ENCODE measurements at regions of chr3 and their contacts with region 1.

Region 1: GRCh38 chr3:168047190-168047795 is 48.4 kb downstream of the GOLIM4 start:
- DNase-seq: peak in 5 of 9 donors; percentile 1 to 37 (median 13)
- ATAC-seq: peak; percentile 80
- H3K4me3 ChIP-seq: no peak overlapping the region
- H3K4me3 Mint-ChIP-seq: no peak overlapping the region
- H3K27ac ChIP-seq: no peak overlapping the region
- H3K27ac Mint-ChIP-seq: no peak overlapping the region
- H3K4me1 ChIP-seq: no peaks in the 10 kb centered on the region
- H3K4me1 Mint-ChIP-seq: no peaks in the 10 kb centered on the region
- H3K27me3 ChIP-seq: no peaks in the 10 kb centered on the region
- H3K27me3 Mint-ChIP-seq: peaks cover 0 to 4% (median 3%) of the 10 kb centered on the region in 5 donors

Region 2: DNA sequence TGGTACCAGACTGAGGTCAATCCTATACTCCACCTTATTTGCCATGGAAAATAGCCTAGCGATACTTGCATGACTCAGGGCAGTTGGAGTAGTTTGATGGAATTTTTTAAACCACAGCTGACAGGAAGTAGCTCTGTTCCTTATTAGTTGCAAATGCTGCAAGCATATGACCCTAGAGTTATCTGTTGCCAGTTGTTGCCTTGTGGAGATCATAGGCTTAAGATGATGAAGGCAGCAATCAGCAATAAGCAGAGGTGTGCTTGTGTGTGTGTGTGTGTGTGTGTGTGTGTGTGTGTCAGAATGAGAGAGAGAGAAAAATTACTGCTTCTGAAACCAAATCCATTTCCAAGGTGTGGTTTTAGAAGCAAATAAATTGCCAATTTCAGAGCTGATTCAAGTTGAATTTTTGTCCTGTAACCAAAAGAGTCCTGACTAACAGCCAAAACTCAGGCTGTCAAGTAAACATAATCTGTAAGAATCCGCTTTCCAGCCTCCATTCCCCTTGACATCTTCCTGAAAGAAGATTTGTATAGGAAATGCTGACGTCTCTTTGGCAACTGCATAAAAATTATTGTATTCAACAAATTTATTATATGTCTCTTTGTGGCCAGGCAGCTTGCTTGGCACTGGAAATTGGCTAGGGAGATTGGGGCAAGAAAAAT is 170.5 kb before region 1 on chr3:
- CTCF ChIA-PET with region 1: no interaction called
- POLR2A ChIA-PET with region 1: no interaction called
- intact Hi-C with region 1: no loop called
- DNase-seq: no peak
- ATAC-seq: no peak
- H3K4me3 ChIP-seq: no peak overlapping the region
- H3K4me3 Mint-ChIP-seq: no peak overlapping the region
- H3K27ac ChIP-seq: no peak overlapping the region
- H3K27ac Mint-ChIP-seq: no peak overlapping the region
- H3K4me1 ChIP-seq: no peaks in the 10 kb centered on the region
- H3K4me1 Mint-ChIP-seq: peaks cover 0 to 3% (median under 1%) of the 10 kb centered on the region in 7 donors
- H3K27me3 ChIP-seq: no peaks in the 10 kb centered on the region
- H3K27me3 Mint-ChIP-seq: peaks cover 4 to 17% (median 16%) of the 10 kb centered on the region in 5 donors

Region 3: GRCh38 chr3:168095611-168096209 is 48.4 kb after region 1 on chr3 and contains the start of gene GOLIM4:
- CTCF ChIA-PET with region 1: no interaction called
- POLR2A ChIA-PET with region 1: no interaction called
- intact Hi-C with region 1: loop called in 1 of 2 experiments (anchors 1 kb)
- DNase-seq: peak in 4 of 9 donors; percentile 2 to 77 (median 22)
- ATAC-seq: peak; percentile 86
- H3K4me3 ChIP-seq: peak within 1 kb of the TSS; percentile 37
- H3K4me3 Mint-ChIP-seq: peak within 1 kb of the TSS; percentile 72 to 96 (median 86)
- H3K27ac ChIP-seq: peak within 1 kb of the TSS; percentile 14
- H3K27ac Mint-ChIP-seq: peak within 1 kb of the TSS in 2 of 9 donors; percentile 51 to 83
- H3K4me1 ChIP-seq: no peaks in the 10 kb centered on the region
- H3K4me1 Mint-ChIP-seq: peaks cover 4 to 15% (median 12%) of the 10 kb centered on the region in 7 donors
- H3K27me3 ChIP-seq: no peaks in the 10 kb centered on the region
- H3K27me3 Mint-ChIP-seq: peaks cover 47 to 60% (median 51%) of the 10 kb centered on the region in 5 donors
- total RNA-seq, gene GOLIM4: 0.43 to 5.5 (median 1.0) TPM

Region 4: DNA sequence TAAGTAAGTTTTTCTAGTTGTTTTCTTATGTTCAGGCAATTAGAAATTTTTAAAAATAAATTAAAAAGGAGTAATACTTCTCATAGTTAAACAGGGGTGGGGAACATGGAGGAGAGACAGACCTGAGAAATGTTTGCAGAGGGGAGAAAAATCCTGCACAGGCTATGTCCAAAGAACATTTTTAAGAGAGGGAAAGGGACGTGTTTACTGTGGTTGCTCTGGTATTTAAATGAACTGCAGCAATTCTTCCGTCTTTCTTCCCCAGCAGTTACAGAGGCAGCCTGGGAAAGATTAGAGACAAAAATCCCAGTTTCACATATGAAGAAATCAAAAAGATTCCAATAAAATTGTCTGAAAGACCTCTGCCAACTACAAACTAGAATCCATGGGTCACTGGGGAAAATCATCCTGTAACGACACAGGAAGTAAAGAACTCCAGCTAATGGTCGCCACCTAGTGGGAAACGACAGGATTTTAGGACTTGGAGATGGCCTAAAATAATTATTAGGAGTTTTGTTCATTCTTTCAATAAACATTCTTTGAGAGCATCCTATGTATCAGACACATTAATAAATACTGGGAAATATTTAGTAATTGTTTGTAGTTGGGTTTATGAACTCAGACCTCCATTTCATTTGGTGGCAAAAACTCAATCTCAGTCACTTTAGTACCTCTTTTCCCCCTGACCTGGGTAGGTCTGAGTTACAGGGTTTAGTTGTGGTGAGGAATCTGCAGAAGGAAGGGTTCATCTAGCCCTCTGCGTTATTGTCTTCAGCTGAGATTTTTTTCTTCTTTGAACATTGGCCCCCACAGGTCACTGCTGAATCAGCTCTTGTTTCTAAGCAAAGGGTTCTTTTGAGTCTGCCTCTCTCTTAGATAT is 118.3 kb after region 1 on chr3:
- CTCF ChIA-PET with region 1: no interaction called
- POLR2A ChIA-PET with region 1: no interaction called
- intact Hi-C with region 1: loop called in 1 of 2 experiments (anchors 1 kb)
- DNase-seq: peak in 2 of 9 donors; percentile 0 to 8
- ATAC-seq: no peak
- H3K4me3 ChIP-seq: no peak overlapping the region
- H3K4me3 Mint-ChIP-seq: peak overlapping the region in 3 of 10 donors; percentile 21 to 53 (median 24)
- H3K27ac ChIP-seq: no peak overlapping the region
- H3K27ac Mint-ChIP-seq: no peak overlapping the region
- H3K4me1 ChIP-seq: no peaks in the 10 kb centered on the region
- H3K4me1 Mint-ChIP-seq: peaks cover 0 to 4% (median 0%) of the 10 kb centered on the region in 7 donors
- H3K27me3 ChIP-seq: no peaks in the 10 kb centered on the region
- H3K27me3 Mint-ChIP-seq: peaks cover 0 to 1% (median 0%) of the 10 kb centered on the region in 5 donors

Region 5: GRCh38 chr3:168467115-168467714 is 419.9 kb after region 1 on chr3:
- CTCF ChIA-PET with region 1: no interaction called
- POLR2A ChIA-PET with region 1: no interaction called
- intact Hi-C with region 1: loop called in 1 of 2 experiments (anchors 1 kb)
- DNase-seq: no peak
- ATAC-seq: peak; percentile 34
- H3K4me3 ChIP-seq: no peak overlapping the region
- H3K4me3 Mint-ChIP-seq: peak overlapping the region in 1 of 10 donors; percentile 6
- H3K27ac ChIP-seq: no peak overlapping the region
- H3K27ac Mint-ChIP-seq: no peak overlapping the region
- H3K4me1 ChIP-seq: no peaks in the 10 kb centered on the region
- H3K4me1 Mint-ChIP-seq: no peaks in the 10 kb centered on the region
- H3K27me3 ChIP-seq: no peaks in the 10 kb centered on the region
- H3K27me3 Mint-ChIP-seq: no peaks in the 10 kb centered on the region

Region 6: DNA sequence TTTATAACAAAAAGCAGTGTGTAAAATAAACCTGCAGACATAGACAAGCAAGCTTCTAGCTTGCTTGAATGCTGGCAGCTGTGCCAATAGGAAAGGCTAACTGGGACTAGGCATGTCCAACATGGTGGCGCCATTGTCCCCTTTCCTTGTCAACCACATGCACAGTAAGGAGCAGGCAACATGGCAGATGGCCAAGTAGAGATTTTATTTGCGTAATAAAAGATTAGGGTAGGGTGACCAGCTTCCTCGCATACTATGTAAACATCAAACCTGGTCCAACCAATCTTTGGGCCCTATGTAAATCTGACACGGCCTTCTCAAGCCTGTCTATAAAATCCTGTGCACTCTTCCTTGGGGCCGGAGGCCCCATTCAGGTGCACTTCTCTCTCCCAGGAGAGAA is 623.8 kb after region 1 on chr3:
- CTCF ChIA-PET with region 1: no interaction called
- POLR2A ChIA-PET with region 1: no interaction called
- intact Hi-C with region 1: no loop called
- DNase-seq: no peak
- ATAC-seq: no peak
- H3K4me3 ChIP-seq: no peak overlapping the region
- H3K4me3 Mint-ChIP-seq: no peak overlapping the region
- H3K27ac ChIP-seq: no peak overlapping the region
- H3K27ac Mint-ChIP-seq: no peak overlapping the region
- H3K4me1 ChIP-seq: no peaks in the 10 kb centered on the region
- H3K4me1 Mint-ChIP-seq: no peaks in the 10 kb centered on the region
- H3K27me3 ChIP-seq: no peaks in the 10 kb centered on the region
- H3K27me3 Mint-ChIP-seq: no peaks in the 10 kb centered on the region

Region 7: DNA sequence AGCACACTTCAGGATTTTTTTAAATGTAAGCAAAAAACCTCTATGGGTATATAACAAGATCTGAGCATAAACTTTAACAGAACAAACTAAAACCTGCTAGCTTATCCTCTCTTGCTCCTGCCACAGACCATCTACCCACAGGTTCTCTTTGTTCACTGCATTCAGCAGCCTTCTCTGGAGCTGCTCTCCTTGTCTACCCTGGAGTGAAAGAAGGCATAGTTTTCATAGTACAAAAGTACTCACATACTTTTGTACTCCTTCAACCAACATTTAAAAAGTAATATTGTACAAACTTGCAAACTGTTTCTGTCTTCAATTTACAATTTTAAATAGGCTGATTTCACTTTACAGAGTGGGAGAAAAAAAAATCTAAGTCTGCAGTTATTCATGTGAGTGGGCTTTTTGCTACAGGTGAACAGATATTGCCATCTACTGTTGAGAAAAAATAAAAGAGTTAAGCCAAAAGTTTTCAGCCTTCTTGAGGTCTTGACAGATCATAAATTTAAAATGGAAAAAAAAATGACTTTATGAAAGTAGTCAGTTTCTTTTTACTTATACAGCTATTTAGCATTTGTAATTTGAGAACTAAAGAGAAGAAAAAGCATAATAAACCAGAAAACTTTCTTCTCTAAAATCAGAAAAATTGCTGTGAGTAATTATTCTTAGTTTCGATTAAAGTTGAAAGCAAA is 1697.2 kb after region 1 on chr3:
- CTCF ChIA-PET with region 1: no interaction called
- POLR2A ChIA-PET with region 1: no interaction called
- intact Hi-C with region 1: loop called in 1 of 2 experiments (anchors 10 kb)
- DNase-seq: no peak
- ATAC-seq: no peak
- H3K4me3 ChIP-seq: no peak overlapping the region
- H3K4me3 Mint-ChIP-seq: no peak overlapping the region
- H3K27ac ChIP-seq: no peak overlapping the region
- H3K27ac Mint-ChIP-seq: no peak overlapping the region
- H3K4me1 ChIP-seq: no peaks in the 10 kb centered on the region
- H3K4me1 Mint-ChIP-seq: peaks cover 0 to 11% (median 5%) of the 10 kb centered on the region in 7 donors
- H3K27me3 ChIP-seq: no peaks in the 10 kb centered on the region
- H3K27me3 Mint-ChIP-seq: peaks cover 23 to 36% (median 27%) of the 10 kb centered on the region in 5 donors

Measured in naive thymus-derived CD4-positive, alpha-beta T cell (primary cell).